ENCODE measurements at regions of chr15 and their contacts with region 1.

Region 1: DNA sequence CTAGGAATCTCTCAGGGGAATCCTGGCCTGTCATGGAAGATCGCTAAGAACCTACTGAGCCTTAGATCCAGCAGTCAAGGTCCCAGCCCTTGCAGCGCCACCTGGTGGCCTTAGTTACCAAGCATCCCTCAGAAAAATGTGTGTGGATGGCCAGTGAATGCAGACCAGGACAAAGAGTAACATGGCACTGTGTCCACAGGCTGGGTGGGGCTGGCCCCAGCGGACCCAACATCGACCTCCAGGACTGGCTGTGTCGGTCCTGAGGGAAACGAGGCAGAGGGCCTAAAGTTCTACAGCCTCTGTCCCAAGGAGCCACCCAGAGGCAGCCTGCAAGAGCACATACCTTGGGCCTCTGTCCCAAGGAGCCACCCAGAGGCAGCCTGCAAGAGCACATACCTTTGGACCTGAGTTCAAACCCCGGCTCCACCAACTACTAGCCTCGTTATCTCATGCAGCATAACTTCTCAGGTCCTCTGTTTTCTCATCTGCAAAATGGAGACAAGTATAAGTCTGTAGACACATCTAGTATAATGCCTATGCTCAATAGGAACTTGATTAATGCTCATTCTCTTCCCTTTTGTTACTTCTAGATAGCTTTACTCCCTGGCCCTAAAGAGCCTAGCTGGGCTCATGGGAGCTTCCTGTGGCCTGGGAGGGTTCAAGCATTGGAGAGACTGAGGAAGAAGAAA is 57.5 kb upstream of the HERC1 start:
- DNase-seq: peak; percentile 88 to 96
- H3K4me3 ChIP-seq: no peak overlapping the region
- H3K4me1 ChIP-seq: no peaks in the 10 kb centered on the region
- H3K27me3 ChIP-seq: no peaks in the 10 kb centered on the region

Region 2: DNA sequence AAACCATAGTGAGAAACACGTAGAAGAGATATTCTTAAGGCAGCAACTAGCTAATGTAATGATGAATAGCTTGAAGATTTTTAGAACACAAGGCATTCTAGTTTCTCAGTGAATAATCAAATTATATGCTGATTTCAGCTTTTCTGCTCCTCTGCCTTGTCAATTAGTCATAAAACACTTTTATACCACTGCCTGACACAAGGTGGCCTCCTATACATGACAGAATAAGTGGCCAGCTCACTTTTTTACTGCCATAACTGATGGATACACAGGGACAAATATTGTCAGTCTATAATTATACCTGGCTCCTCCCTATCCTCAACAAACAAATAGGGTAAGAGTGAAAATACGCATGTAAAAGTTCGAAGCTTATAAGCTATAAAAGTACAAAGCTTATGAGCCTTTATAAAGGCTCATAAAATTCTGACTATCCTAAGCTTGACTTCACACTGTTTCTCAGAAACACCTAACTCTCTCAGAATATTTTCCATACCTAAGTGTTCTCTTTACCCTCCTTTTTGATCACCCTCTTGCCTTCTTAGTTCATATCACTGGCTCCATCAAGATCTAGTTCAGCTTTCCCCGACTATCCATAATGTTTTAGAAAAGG is 139.0 kb before region 1 on chr15:
- in situ Hi-C with region 1: loop called (anchors 25 kb)
- DNase-seq: peak; percentile 70 to 87
- H3K4me3 ChIP-seq: no peak overlapping the region
- H3K4me1 ChIP-seq: peaks cover 8% of the 10 kb centered on the region
- H3K27me3 ChIP-seq: no peaks in the 10 kb centered on the region